GM12878 (cell line): ENCODE measurements at regions of chr4 and their contacts with region 1.

Region 1: DNA sequence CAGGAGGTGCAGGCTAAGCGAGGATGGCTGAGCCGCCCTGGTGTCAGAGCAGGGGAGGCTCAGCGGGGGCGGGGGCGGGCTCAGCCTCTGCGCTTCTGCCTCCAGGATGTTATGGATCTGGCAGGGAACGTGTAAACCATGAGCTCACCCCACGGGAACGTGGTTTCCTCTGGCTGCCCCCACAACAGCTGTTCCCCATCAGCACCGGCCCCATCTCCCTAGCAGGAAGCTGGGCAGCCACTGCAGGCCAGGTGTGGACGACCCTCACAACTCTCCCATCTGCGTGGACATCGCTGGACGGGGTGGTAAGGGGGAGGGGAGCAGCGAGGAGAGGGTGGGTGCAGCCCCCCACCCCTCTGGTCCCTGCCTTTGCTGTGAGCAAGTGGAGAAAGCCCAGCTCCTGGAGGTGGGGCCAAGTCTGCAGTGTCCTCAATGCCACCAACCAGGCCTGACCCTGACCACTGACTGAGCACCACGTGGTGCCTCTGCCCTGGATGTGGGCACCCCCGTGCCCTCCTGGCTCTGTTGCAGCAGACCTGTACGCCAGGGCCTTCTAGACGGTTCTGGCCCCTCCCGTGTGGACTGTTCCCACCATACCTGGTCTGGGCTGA is 28.1 kb upstream of the SPON2 start:
- DNase-seq: no peak
- ATAC-seq: peak; percentile 41
- H3K4me3 ChIP-seq: peak overlapping the region; percentile 75
- H3K27ac ChIP-seq: peak overlapping the region; percentile 77
- H3K4me1 ChIP-seq: peaks cover 38% of the 10 kb centered on the region
- H3K27me3 ChIP-seq: no peaks in the 10 kb centered on the region
- CTCF ChIP-seq: no peak
- EP300 ChIP-seq: no peak
- POLR2A ChIP-seq: no peak
- RAD21 ChIP-seq: no peak

Region 2: DNA sequence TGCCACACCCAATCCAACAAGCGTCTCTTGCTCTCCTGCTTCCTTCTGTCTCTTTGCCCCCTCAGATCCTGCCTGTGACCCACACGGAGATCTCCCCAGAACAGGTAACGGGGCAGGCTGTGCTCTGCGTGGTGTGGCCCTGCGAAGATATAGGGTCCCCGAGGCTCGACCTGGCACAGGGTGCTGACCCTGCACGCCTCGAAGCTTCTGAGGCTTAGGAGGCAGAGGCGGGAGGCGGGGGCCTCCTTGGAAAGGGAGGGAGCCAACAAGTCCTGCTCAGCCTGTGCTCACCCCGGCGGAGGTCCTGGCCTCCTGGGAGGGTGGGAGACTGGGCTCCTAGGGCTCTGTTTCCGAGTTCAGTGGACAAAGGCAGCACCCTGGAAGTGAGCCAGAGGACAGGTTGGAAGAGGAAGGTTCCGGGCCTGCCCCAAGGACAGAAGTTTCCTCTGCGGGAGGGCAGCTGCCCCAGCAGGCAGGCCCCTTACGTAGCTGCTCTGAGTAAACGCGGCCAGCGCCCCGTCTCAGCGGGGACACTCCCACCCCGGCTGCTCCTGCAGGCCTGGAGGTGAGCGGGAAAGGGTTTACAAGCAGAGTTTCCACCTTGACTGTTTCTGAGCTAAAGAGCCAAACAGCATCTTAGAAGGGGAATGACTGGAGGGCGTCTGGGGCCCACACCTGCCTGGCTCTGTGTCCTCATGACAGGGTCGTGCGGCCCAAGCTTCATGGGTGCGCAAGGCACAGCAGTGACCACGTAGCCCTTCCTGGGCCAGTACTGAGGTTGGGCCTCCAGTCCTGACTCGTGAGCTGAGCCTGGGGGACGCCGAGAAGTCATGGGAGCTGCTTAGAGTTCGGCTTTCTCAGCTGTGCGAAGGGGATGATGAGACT is 252.2 kb before region 1 on chr4:
- CTCF ChIA-PET with region 1: no interaction called
- POLR2A ChIA-PET with region 1: no interaction called
- RAD21 ChIA-PET with region 1: no interaction called
- SMC1A ChIA-PET with region 1: no interaction called
- in situ Hi-C with region 1: no loop called
- intact Hi-C with region 1: no loop called
- DNase-seq: no peak
- ATAC-seq: no peak
- H3K4me3 ChIP-seq: no peak overlapping the region
- H3K27ac ChIP-seq: no peak overlapping the region
- H3K4me1 ChIP-seq: no peaks in the 10 kb centered on the region
- H3K27me3 ChIP-seq: no peaks in the 10 kb centered on the region
- CTCF ChIP-seq: no peak
- EP300 ChIP-seq: no peak
- POLR2A ChIP-seq: no peak
- RAD21 ChIP-seq: no peak

Region 3: GRCh38 chr4:1154523-1155182 is 45.9 kb before region 1 on chr4:
- CTCF ChIA-PET with region 1: no interaction called
- POLR2A ChIA-PET with region 1: no interaction called
- RAD21 ChIA-PET with region 1: no interaction called
- SMC1A ChIA-PET with region 1: no interaction called
- in situ Hi-C with region 1: no loop called
- intact Hi-C with region 1: no loop called
- DNase-seq: no peak
- ATAC-seq: no peak
- H3K4me3 ChIP-seq: no peak overlapping the region
- H3K27ac ChIP-seq: no peak overlapping the region
- H3K4me1 ChIP-seq: peaks cover 6% of the 10 kb centered on the region
- H3K27me3 ChIP-seq: peaks cover 0 to 2% of the 10 kb centered on the region in 2 experiments; a peak in 2 of 4 replicates
- CTCF ChIP-seq: no peak
- EP300 ChIP-seq: no peak
- POLR2A ChIP-seq: no peak
- RAD21 ChIP-seq: no peak

Region 4: GRCh38 chr4:1183985-1184773 is 16.4 kb before region 1 on chr4:
- CTCF ChIA-PET with region 1: interaction called, 6 read pairs
- POLR2A ChIA-PET with region 1: interaction called, 14 read pairs
- RAD21 ChIA-PET with region 1: interaction called, 17 read pairs
- SMC1A ChIA-PET with region 1: interaction called, 33 read pairs
- in situ Hi-C with region 1: no loop called
- intact Hi-C with region 1: loop called (anchors 2 kb)
- DNase-seq: peak; percentile 64
- ATAC-seq: peak; percentile 82
- H3K4me3 ChIP-seq: peak overlapping the region; percentile 60
- H3K27ac ChIP-seq: peak overlapping the region; percentile 57
- H3K4me1 ChIP-seq: peaks cover 27% of the 10 kb centered on the region
- H3K27me3 ChIP-seq: no peaks in the 10 kb centered on the region
- CTCF ChIP-seq: no peak
- EP300 ChIP-seq: 0 out of 4 replicates have a peak, but pooled peaks of 1 of the 2 experiments have one; percentile 39
- POLR2A ChIP-seq: no peak
- RAD21 ChIP-seq: no peak

Region 5: DNA sequence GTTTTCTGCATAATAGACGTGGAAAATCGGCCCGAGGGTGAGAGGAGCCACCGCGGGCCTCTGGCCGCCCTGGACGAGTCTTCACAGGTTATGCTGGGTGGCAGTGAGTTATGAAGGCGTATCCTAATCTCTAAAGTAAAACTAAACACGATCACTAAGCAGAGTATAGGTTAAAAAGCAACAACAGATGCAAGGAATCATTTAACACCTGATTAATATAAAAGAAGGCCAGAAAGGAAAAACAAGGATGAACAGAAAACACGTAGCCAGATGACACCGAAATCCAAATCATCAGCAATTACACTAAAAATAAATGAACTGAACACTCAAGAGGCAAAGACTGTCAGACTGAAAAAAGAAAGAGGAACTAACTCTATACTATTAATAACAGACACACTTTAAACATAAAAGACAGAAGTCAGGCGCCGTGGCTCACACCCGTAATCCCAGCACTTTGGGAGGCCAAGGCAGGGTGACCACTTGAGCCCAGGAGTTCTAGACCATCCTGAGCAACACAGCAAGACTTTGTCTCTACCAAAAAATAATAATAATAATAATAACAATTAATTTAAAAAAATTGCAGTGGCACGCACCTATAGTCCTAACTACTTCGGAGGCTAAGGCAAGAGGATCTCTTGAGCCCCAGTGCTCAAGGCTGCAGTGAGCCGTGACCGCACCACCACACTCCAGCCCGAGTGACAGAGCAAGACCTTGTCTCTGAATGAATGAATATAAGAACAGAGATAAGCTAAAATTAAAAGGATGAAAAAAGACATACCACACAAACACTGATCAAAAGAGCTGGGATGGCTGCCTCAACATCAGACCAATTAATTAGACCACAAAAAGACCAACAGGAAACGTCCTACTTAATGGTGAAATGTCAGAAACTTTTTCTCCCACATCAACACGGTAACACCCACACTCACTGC is 18.4 kb after region 1 on chr4:
- CTCF ChIA-PET with region 1: interaction called, 8 read pairs
- POLR2A ChIA-PET with region 1: interaction called, 26 read pairs
- RAD21 ChIA-PET with region 1: interaction called, 20 read pairs
- SMC1A ChIA-PET with region 1: interaction called, 18 read pairs
- in situ Hi-C with region 1: no loop called
- intact Hi-C with region 1: loop called (anchors 1 kb)
- DNase-seq: peak; percentile 92
- ATAC-seq: peak; percentile 91
- H3K4me3 ChIP-seq: peak overlapping the region; percentile 45; the same call in 1 of the 2 replicates
- H3K27ac ChIP-seq: peak overlapping the region; percentile 88
- H3K4me1 ChIP-seq: peaks cover 51% of the 10 kb centered on the region
- H3K27me3 ChIP-seq: no peaks in the 10 kb centered on the region
- CTCF ChIP-seq: no peak
- EP300 ChIP-seq: peak; percentile 87 to 88; a peak in 3 of 4 replicates
- POLR2A ChIP-seq: no peak
- RAD21 ChIP-seq: no peak